Aorta (tissue), 5 donors: ENCODE measurements at regions of chr11 and their contacts with region 1.

Region 1: GRCh38 chr11:43723617-43724016 is 43.1 kb downstream of the HSD17B12 start:
- DNase-seq: no peak
- ATAC-seq: no peak
- H3K4me3 ChIP-seq: no peak overlapping the region
- H3K27ac ChIP-seq: no peak overlapping the region
- H3K4me1 ChIP-seq: peaks cover 1 to 7% of the 10 kb centered on the region in 2 donors
- H3K27me3 ChIP-seq: no peaks in the 10 kb centered on the region

Region 2: DNA sequence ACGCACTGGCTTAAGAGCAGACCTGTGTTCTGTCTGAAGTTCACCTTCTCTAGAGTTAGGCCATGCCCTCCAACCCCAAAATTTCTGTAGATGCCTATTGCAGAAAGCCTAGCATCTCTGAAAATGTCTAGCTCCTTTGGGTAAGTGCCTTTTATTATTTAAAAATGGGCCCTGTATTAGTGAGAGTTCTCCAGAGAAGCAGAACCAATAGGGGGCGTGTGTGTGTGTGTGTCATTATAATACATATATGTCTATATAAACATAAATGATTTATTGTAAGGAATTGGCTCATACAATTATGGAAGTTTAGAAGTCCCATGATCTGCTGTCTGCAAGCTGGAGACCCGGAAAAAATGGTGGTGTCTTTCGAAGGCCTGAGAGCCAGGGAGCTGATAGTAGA is 220.2 kb before region 1 on chr11:
- intact Hi-C with region 1: no loop called
- DNase-seq: no peak
- ATAC-seq: no peak
- H3K4me3 ChIP-seq: no peak overlapping the region
- H3K27ac ChIP-seq: no peak overlapping the region
- H3K4me1 ChIP-seq: no peaks in the 10 kb centered on the region
- H3K27me3 ChIP-seq: no peaks in the 10 kb centered on the region

Region 3: DNA sequence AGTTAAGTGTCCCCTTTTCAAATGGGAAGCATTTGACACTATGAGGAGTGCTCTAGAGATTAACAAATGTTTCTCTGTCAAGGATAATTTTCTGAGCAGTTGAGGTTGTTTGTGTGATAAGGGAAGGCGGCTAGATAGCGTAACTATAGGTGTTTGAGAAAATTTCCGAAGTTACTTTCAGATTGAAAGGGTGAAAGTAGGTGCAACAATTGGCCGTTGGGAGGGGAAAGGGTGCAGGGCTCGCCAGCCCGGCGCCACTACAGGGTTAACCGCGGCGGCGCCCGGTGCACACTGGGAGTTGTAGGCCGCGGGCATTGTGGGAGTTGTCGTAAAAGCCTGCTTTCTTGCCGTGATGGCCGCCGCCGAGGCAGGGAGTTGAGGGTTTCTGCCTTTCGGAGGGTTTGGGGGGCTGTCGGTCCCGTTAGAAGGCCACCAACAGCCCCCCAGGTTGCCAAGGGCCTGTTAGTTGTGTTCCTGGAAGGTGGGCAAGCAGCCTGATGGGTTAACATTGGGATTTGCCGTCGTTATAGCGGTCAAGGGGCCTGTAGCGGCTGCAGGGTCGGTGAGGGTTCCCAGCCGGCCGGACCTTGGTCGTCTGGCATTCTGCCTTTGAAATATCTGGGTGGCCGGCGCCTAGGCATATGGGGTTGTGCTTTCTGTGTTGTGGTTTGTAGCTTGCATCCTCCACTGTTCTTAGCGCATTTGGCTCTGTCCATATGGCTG is 79.6 kb before region 1 on chr11:
- intact Hi-C with region 1: no loop called
- DNase-seq: peak; percentile 90 to 94
- ATAC-seq: peak; percentile 99
- H3K4me3 ChIP-seq: peak overlapping the region; percentile 79 to 94
- H3K27ac ChIP-seq: no peak overlapping the region
- H3K4me1 ChIP-seq: peaks cover 0 to 6% of the 10 kb centered on the region in 2 donors
- H3K27me3 ChIP-seq: no peaks in the 10 kb centered on the region

Region 4: DNA sequence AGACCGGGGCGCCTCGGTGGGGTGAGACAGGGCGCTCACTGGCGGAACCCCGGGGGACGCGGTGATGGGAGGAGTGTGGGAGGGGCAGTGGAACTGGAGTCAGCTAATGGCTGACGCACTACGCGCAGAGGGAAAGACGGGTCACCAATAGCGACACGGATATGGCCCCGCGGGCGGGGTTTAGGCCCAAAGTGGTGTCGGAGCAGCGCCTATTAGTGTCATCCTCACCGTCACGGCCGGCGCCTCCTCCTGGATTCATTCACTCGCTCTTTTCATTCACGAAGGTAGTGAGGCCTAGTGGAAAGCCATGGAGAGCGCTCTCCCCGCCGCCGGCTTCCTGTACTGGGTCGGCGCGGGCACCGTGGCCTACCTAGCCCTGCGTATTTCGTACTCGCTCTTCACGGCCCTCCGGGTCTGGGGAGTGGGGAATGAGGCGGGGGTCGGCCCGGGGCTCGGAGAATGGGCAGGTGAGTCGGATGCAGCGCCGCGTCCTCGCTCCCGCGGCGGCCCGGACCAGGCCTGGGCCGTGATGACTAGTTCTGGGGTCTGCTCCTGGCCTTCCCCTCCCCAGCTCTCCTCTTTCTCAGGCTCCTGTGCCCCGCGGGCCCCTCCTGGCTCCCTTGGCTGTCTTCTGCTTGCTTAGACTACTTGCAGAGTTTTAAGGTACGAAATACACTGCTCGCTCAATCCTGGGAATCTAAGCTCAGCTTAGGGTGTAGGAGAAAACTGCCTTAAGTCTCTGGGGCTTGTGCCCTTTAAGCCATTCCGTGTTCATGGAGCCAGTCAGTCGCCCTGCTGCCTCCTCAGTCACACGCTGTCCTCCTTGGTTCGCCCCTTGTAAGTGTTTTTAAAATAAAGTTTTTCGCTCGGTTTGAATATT is 42.9 kb before region 1 on chr11 and contains the start of gene HSD17B12:
- intact Hi-C with region 1: loop called (anchors 5 kb)
- DNase-seq: peak; percentile 100
- ATAC-seq: peak; percentile 100
- H3K4me3 ChIP-seq: peak within 1 kb of the TSS; percentile 40 to 92
- H3K27ac ChIP-seq: peak within 1 kb of the TSS; percentile 63 to 71
- H3K4me1 ChIP-seq: peaks cover 0 to 1% of the 10 kb centered on the region in 2 donors
- H3K27me3 ChIP-seq: no peaks in the 10 kb centered on the region
- total RNA-seq, gene HSD17B12: 106 to 108 TPM

Region 5: GRCh38 chr11:43687120-43687791 is 36.4 kb before region 1 on chr11:
- intact Hi-C with region 1: loop called (anchors 5 kb)
- DNase-seq: peak in 1 of 2 donors; percentile 71
- ATAC-seq: peak; percentile 88
- H3K4me3 ChIP-seq: no peak overlapping the region
- H3K27ac ChIP-seq: peak overlapping the region in 1 of 2 donors; percentile 86
- H3K4me1 ChIP-seq: peaks cover 6 to 10% of the 10 kb centered on the region in 2 donors
- H3K27me3 ChIP-seq: no peaks in the 10 kb centered on the region

Region 6: DNA sequence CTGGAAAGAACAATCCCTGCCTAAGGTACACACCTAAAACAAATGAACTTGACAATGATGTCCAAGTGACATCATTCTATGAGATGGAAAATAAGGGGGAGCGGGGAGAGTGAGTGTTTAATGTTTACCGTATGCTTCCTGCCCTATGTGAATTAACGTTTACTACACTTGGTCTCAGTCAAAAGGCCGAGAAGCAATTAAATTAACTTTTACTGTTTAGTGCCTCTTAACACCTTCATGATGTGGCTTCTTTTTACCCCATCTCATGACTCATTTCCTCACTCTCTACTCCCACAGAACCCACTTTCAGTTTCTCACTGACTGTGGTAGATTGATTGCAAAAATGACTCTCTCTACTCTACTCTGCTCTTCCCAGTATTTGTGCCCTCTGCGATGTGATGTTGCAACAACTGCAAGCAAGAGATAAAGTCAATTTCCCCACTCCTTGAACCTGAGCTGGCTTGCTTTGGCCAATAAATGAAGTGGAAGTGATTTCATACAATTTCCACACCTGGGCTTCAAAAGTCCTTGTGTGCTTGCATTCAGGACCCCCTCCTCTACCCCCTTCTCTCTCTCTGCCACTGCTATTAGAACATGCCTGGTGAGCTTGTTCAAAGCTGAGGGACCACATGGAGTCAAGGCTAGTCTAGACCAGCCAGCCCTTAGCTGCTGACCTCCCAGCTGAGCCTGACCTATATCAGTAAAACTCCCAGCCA is 145.4 kb after region 1 on chr11:
- intact Hi-C with region 1: no loop called
- DNase-seq: no peak
- ATAC-seq: no peak
- H3K4me3 ChIP-seq: no peak overlapping the region
- H3K27ac ChIP-seq: no peak overlapping the region
- H3K4me1 ChIP-seq: no peaks in the 10 kb centered on the region
- H3K27me3 ChIP-seq: no peaks in the 10 kb centered on the region